ENCODE measurements at regions of chr6 and their contacts with region 1.

Region 1: DNA sequence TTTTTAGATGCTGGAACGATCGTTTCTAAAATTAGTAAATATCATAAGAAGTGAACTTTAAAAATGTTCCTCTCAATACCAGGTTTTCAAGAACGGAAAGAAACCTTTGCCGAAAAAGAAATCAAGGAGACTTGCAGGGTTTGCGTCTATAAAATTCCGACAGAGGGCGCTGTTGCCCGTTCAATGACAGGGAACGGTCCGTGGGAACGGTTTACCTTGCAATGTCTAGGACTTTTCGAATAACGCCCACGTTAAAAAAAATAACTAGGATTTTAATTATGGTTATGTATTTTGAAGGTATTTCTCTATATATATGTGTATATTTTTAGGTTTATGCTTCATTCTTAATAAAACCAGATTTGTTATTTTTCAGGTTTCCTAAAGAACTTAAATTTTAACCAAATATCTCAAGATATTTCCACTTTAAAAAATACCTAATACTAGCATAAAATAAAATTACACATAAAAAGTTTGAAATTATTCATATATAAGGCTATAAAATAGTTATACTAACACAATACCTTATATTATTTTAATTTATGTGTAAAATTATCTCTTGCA is 2.5 kb upstream of the TFAP2B start:
- ATAC-seq: peak in 7 of 8 experiments; percentile 43 to 84 (median 49)
- H3K4me3 ChIP-seq: peak overlapping the region; percentile 7 to 37 (median 18)
- H3K27ac ChIP-seq: no peak overlapping the region
- H3K4me1 ChIP-seq: peaks cover 0 to 11% of the 10 kb centered on the region in 2 donors

Region 2: GRCh38 chr6:51350308-51350904 is 534.2 kb after region 1 on chr6:
- in situ Hi-C with region 1: loop called in 1 of 9 experiments (anchors 25 kb)
- ATAC-seq: no peak
- H3K4me3 ChIP-seq: no peak overlapping the region
- H3K27ac ChIP-seq: no peak overlapping the region
- H3K4me1 ChIP-seq: no peaks in the 10 kb centered on the region

Region 3: DNA sequence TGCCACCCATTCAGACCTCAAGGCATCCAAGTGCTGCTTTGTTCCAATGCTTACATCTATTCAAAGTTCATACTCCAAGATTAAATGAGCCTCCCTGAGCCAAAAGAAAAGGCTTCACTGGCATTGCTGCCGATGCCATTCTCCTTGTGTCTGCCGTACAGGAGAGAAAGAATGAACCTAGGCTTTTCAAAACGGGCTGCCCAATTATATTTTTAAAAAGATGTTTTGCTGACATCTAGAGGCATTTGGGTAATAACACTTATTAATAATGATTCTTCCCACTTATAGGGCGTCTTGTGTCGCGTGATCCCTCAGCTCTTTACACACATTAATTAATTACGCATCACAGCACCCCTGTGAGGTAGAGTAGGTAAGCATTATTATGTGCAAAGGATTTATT is 725.7 kb after region 1 on chr6:
- in situ Hi-C with region 1: loop called in 3 of 9 experiments (anchors 10 to 25 kb)
- ATAC-seq: peak in 7 of 8 experiments; percentile 21 to 72 (median 64)
- H3K4me3 ChIP-seq: no peak overlapping the region
- H3K27ac ChIP-seq: no peak overlapping the region
- H3K4me1 ChIP-seq: peaks cover 0 to 15% of the 10 kb centered on the region in 2 donors

Region 4: DNA sequence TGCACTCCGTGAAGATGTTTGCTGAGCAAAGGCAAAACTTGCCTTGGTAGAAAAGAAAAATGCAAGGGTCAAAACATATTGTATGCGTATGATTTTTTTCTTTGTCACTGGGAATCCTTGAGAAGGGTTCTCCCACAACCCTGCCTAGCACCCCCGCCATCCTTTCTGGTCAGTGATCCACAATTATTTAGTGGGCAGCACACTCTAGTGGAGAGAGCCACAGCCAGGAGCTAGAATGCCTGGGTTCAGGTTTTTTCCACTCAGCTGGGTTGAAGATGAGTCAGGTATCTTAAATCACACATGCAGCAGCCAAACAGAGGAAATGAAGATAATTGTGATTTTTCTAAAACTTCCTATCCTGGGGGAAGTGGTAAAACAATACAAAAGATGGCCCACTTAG is 1028.1 kb after region 1 on chr6:
- in situ Hi-C with region 1: loop called in 2 of 9 experiments (anchors 25 kb)
- ATAC-seq: peak in 1 of 8 experiments; percentile 68
- H3K4me3 ChIP-seq: no peak overlapping the region
- H3K27ac ChIP-seq: no peak overlapping the region
- H3K4me1 ChIP-seq: peaks cover 41 to 49% of the 10 kb centered on the region in 2 donors

Region 5: GRCh38 chr6:52020945-52021570 is 1204.9 kb after region 1 on chr6:
- in situ Hi-C with region 1: loop called in 2 of 9 experiments (anchors 25 kb)
- ATAC-seq: peak in 2 of 8 experiments; percentile 28 to 33
- H3K4me3 ChIP-seq: no peak overlapping the region
- H3K27ac ChIP-seq: no peak overlapping the region
- H3K4me1 ChIP-seq: no peaks in the 10 kb centered on the region

Region 6: DNA sequence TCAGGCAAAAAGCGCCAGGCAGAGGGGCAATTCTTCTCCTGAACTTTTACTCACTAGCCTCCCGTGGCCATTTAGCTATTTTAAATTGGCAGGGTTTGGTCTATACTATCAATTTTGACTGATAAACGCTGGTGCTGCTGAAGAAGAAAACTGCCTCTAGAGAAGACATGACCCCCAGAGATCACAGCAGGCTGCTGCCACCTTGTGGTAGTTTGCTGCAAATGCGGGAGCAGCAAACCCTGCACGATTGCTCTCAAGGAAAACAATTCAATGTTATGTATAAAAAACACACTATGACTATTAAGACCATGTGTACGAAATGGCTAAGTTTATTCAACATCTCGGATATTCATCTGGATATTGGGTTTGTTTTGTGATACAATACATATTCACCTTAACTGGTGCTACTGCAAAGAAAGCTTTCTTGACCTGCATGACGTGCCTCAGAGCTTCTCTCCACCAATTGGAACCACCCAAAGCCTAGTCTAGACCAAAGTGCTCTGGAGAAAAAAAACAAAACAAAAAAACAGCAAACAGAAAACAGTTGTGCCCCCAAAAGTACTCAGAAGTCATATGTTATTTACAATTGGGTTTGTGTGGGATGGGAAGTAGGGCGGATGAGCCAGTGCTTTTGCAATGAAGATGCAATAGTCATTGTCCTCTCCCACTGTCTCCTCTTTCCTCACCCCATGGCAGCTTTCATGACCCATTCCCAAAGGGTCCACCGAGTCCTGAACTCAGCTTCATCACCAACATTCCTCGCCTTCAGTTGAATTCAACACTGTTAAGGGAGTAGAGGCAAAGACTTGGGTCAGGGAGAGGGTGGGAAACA is 1447.7 kb after region 1 on chr6:
- in situ Hi-C with region 1: no loop called
- ATAC-seq: peak; percentile 50 to 86 (median 68)
- H3K4me3 ChIP-seq: no peak overlapping the region
- H3K27ac ChIP-seq: no peak overlapping the region
- H3K4me1 ChIP-seq: no peaks in the 10 kb centered on the region